Aorta (tissue), 5 donors: ENCODE measurements at regions of chr14 and their contacts with region 1.

Region 1: DNA sequence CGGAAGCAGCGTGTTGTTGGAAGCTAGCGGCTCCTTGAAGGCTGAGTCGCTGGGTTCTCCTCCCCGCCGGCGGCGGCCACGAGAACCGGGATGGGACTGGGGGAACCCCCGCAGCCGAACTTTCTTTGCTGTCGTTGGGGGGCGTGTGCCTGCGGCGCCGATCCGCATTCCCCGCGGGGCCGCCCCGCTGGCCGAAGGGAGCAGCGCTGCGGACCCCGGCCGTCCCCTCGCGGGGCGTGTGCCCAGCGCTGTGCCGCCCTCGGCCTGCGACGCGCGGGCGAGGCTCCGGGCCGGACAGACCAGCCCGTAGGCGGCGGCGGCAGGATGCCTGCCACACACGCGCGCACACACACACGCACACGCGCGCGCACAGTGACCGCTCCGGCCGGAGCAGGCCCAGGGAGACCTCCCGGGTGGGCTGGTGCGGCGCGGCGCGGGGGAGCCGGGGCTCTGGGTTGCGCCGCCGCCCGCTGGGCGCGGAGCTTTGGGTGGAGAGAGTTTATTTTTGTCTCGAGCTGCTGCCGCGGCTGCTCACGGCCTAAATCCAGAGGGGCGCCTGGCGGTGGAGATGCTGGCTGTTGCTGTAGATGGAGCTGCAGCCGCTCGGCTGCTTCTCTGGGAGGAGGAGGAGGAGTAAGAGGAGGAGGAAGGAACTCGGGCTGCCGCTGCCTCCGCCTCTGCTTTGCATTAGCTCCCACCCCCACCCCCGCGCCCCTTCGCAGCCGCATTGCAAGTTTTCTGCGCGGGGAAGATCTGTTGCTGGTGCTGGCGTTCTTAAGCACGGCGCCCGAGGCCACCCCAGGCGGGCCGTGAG is at the start of gene SAMD4A:
- DNase-seq: peak; percentile 87 to 92
- ATAC-seq: peak; percentile 55
- H3K4me3 ChIP-seq: peak within 1 kb of the TSS; percentile 94 to 98
- H3K27ac ChIP-seq: peak within 1 kb of the TSS; percentile 95 to 99
- H3K4me1 ChIP-seq: no peaks in the 10 kb centered on the region
- H3K27me3 ChIP-seq: no peaks in the 10 kb centered on the region
- total RNA-seq, gene SAMD4A: 131 to 386 TPM

Region 2: DNA sequence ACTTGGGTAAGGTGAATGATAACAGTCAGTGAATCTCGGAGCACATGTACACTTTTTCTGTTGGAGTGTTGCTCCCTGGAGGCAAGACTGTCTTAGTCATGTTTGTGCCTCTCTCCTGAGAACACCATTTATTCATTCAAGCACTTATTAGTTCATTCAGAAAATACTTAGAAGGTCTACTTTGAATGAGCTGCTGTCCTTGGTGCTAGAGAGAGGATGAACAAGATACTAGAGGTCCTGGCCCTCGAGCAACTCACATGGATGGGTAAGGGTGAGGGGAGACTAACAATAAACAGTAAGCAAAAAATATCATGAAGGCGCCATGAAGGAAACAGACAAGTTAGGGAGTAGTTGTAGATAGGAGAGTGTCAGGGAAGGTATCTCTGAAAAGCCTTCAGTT is 16.8 kb before region 1 on chr14:
- intact Hi-C with region 1: no loop called
- DNase-seq: no peak
- ATAC-seq: no peak
- H3K4me3 ChIP-seq: no peak overlapping the region
- H3K27ac ChIP-seq: no peak overlapping the region
- H3K4me1 ChIP-seq: no peaks in the 10 kb centered on the region
- H3K27me3 ChIP-seq: no peaks in the 10 kb centered on the region

Region 3: DNA sequence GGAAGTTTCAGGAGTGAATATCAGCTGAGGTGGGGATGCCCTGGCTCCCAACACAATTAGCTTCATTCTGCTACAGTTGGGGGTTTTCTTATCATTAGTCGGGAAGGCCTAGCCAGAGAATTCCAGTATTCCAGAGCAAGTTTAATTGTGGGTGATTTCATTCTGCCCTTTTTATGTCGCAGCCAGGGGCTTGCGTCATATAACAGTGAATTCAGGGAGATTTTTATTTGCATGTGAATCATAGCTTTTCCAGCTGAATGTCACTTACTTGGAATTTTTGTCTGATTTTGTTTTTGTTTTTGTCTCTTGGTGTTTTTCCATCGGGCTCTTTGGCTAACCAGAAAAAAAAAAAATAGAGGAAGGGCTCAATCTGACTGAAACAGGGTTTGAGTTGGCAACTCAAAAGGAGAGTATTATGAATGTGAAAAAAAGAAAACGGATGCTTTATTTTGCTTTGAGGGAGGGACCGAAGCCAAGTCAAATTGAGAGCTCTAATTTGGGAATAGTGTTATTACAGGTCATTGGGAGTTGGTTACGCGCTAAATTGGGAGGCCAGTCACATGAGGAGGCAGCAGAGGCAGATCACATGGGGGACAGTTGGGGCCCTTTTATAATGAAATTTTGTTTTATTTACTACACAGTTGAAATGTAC is 119.7 kb after region 1 on chr14:
- intact Hi-C with region 1: loop called (anchors 2 to 5 kb)
- DNase-seq: peak; percentile 69 to 82
- ATAC-seq: peak; percentile 86
- H3K4me3 ChIP-seq: no peak overlapping the region
- H3K27ac ChIP-seq: peak overlapping the region; percentile 97 to 100
- H3K4me1 ChIP-seq: peaks cover 8 to 19% of the 10 kb centered on the region in 2 donors
- H3K27me3 ChIP-seq: no peaks in the 10 kb centered on the region

Region 4: GRCh38 chr14:54805521-54806322 is 239.1 kb after region 1 on chr14:
- intact Hi-C with region 1: loop called (anchors 2 kb)
- DNase-seq: peak; percentile 91 to 96
- ATAC-seq: peak; percentile 88
- H3K4me3 ChIP-seq: no peak overlapping the region
- H3K27ac ChIP-seq: no peak overlapping the region
- H3K4me1 ChIP-seq: no peaks in the 10 kb centered on the region
- H3K27me3 ChIP-seq: no peaks in the 10 kb centered on the region

Region 5: DNA sequence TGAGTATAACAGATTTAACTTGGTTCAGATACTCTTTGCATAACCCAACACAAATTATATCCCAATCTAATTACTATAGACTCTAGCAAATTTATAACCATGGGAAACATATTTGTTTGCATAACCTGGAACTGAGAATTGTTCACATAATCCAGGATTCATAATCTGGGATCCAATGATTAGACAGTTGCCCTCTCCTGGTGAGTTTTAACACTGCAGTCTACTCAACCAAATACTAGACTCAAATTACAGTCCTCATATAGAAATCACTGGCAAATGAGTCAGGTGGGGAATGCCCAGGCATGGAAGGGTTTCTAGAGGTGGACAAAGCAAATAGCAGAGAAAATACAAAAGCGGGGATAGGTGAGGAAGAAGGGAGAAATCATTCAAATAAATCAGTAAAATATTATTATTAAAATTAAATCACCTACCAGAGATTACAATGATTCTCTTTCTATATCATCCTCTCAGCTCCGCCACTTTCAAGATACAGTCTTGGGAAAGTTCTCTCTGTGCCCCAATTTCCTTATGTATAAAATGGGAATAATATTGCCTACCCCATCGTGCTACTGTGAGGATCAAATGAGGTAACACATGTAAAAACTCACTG is 326.6 kb after region 1 on chr14:
- intact Hi-C with region 1: loop called (anchors 10 kb)
- DNase-seq: no peak
- ATAC-seq: no peak
- H3K4me3 ChIP-seq: no peak overlapping the region
- H3K27ac ChIP-seq: no peak overlapping the region
- H3K4me1 ChIP-seq: no peaks in the 10 kb centered on the region
- H3K27me3 ChIP-seq: no peaks in the 10 kb centered on the region